PC-3 (cell line): ENCODE measurements at regions of chr7 and their contacts with region 1.

Region 1: GRCh38 chr7:148962823-148963582 is 65.3 kb downstream of the PDIA4 start:
- DNase-seq: peak; percentile 57
- ATAC-seq: peak; percentile 23
- H3K4me3 ChIP-seq: peak overlapping the region; percentile 76
- H3K27ac ChIP-seq: no peak overlapping the region
- H3K4me1 ChIP-seq: peaks cover 6% of the 10 kb centered on the region; the same call in 1 of the 2 replicates
- H3K27me3 ChIP-seq: no peaks in the 10 kb centered on the region
- CTCF ChIP-seq: peak; percentile 94

Region 2: DNA sequence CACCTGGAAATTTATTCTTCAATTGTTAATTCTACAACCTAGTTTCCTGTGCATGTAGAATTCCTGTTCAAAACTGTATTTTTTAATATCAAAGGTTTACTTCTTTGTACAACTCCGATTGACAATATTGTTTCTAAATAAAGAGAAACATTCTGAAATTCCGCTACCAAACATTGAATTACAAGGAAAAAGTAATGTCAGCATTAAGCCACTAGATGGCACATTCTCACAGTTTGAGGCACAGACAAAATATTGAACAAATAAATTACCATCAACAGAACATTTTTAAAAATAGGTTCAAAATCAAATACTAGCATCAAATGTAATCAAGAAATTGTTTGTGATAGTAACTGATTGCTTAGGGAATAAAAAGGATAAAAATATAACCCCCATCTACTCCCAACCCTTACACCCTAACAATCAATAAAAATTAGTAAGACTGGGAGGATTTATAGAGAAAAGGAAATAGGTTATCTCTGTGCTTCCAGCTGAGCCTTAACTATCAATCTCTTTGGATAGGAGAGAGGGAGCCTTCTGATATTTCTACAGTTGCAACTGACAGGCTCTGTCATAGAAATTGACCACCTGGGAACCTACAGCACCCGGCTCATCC is 459.0 kb before region 1 on chr7:
- CTCF ChIA-PET with region 1: no interaction called
- POLR2A ChIA-PET with region 1: no interaction called
- intact Hi-C with region 1: loop called (anchors 1 kb)
- DNase-seq: peak; percentile 57
- ATAC-seq: no peak
- H3K4me3 ChIP-seq: no peak overlapping the region
- H3K27ac ChIP-seq: no peak overlapping the region
- H3K4me1 ChIP-seq: no peaks in the 10 kb centered on the region
- H3K27me3 ChIP-seq: peaks cover 52% of the 10 kb centered on the region
- CTCF ChIP-seq: peak; percentile 80

Region 3: GRCh38 chr7:148664324-148664723 is 298.7 kb before region 1 on chr7:
- CTCF ChIA-PET with region 1: no interaction called
- POLR2A ChIA-PET with region 1: no interaction called
- intact Hi-C with region 1: no loop called
- DNase-seq: no peak
- ATAC-seq: peak; percentile 51; the same call in 1 of the 2 replicates
- H3K4me3 ChIP-seq: no peak overlapping the region
- H3K27ac ChIP-seq: no peak overlapping the region
- H3K4me1 ChIP-seq: no peaks in the 10 kb centered on the region
- H3K27me3 ChIP-seq: no peaks in the 10 kb centered on the region
- CTCF ChIP-seq: no peak

Region 4: DNA sequence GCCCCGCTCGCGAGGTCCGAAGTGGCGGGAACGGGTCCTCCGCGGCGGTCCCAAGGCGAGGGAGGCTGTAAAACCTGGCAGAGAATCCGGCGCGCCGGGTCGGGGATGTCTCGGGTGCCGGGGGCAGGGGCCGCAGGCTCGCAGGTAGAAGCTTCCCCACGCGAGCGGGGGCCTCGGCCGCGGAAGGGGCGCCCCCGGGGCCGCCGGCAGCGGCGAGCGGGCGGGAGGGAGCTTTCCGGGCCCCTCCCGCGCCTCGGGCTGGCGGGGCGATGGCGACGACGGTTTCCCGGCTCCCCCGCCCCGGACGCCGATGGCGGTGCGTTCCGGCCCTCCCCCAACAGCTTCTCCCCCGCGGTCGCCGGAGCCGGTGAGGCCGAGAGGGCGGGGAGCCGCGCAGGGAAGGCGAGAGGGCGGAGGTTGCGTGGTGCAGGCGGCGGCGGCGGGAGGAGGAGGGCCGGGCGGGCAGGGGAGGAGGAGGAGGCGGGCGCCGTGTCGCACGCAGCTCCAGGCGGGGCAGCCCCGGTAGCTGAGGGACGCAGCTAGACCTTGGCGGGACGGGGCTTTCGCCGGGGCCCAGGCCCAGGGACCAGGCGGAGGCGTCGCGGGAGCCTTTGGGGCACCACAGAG is 264.5 kb before region 1 on chr7 and contains the start of gene CUL1:
- CTCF ChIA-PET with region 1: interaction called, 14 read pairs
- POLR2A ChIA-PET with region 1: interaction called, 12 read pairs
- intact Hi-C with region 1: loop called (anchors 5 kb)
- DNase-seq: peak; percentile 66
- ATAC-seq: peak; percentile 77
- H3K4me3 ChIP-seq: peak within 1 kb of the TSS; percentile 81
- H3K27ac ChIP-seq: peak within 1 kb of the TSS; percentile 65
- H3K4me1 ChIP-seq: peaks cover 33% of the 10 kb centered on the region
- H3K27me3 ChIP-seq: no peaks in the 10 kb centered on the region
- CTCF ChIP-seq: no peak
- total RNA-seq, gene CUL1: 38.0 and 43.6 TPM in 2 replicates

Region 5: DNA sequence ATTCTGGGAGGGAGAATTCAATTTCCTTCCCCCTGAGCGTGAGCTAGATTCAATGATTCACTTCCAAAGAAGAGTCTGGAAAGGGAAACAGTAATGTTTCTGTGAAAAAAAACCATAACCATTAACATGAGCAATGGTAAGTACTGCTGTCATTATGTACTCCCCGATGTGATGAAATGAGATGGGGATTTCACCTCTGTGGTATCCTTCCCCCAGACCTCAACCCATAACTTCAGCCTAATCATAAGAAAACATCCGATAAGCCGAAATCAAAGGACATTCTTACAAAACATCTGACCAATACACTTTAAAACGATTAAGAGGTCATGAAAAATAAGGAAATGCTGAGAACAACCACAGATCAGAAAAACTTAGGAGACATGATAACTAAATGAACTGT is 106.1 kb before region 1 on chr7:
- CTCF ChIA-PET with region 1: interaction called, 5 read pairs
- POLR2A ChIA-PET with region 1: no interaction called
- intact Hi-C with region 1: loop called (anchors 1 kb)
- DNase-seq: no peak
- ATAC-seq: peak; percentile 15
- H3K4me3 ChIP-seq: no peak overlapping the region
- H3K27ac ChIP-seq: no peak overlapping the region
- H3K4me1 ChIP-seq: no peaks in the 10 kb centered on the region
- H3K27me3 ChIP-seq: no peaks in the 10 kb centered on the region
- CTCF ChIP-seq: no peak

Region 6: DNA sequence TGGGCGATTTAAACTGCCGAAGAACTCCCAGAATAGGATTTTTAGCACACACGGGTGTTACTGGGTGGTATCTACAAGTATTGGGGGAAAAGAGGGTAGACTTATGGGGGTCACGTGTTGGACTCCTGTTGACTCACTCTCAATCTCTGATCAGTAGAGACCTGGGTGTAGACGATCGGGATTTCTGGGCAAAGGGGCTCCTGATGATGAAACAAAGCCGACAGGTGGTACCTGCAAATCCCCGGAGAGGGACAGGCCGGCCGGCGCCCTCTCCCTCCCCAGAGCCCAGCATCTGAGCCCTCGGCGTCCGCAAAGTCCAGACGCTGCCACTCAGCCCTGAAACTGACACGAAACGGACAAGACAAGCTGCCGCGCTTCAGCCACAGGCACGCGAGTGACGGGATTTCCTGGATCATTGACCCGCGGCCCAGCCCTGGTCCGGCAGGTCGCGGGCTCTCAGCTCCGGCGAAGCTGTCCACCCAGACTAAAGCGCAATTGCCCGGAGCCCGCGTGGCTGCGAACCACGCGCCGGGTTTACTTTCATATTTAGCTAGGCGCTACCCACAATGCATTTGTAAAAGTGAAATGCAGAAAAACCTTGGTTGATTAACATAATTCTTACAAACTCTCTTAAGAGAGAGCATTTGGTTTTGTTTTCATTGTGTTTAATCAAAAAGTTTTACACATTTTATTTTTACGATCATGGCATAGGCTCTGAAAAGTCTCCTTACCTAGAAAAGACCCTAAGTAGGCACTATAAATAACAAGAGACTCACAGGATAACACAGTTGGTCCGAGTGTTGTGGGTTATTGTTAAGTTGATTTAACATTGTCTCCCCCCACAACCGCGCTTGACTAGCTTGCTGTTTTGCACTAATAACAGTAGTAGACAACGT is 22.1 kb before region 1 on chr7:
- CTCF ChIA-PET with region 1: interaction called, 6 read pairs
- POLR2A ChIA-PET with region 1: no interaction called
- intact Hi-C with region 1: loop called (anchors 1 kb)
- DNase-seq: peak; percentile 71
- ATAC-seq: peak; percentile 76
- H3K4me3 ChIP-seq: peak overlapping the region; percentile 76
- H3K27ac ChIP-seq: peak overlapping the region; percentile 73
- H3K4me1 ChIP-seq: peaks cover 12% of the 10 kb centered on the region
- H3K27me3 ChIP-seq: no peaks in the 10 kb centered on the region
- CTCF ChIP-seq: no peak

Region 7: GRCh38 chr7:149355390-149356048 is 392.5 kb after region 1 on chr7:
- CTCF ChIA-PET with region 1: no interaction called
- POLR2A ChIA-PET with region 1: no interaction called
- intact Hi-C with region 1: no loop called
- DNase-seq: peak; percentile 79
- ATAC-seq: peak; percentile 83
- H3K4me3 ChIP-seq: peak overlapping the region; percentile 55; the same call in 1 of the 2 replicates
- H3K27ac ChIP-seq: no peak overlapping the region
- H3K4me1 ChIP-seq: no peaks in the 10 kb centered on the region
- H3K27me3 ChIP-seq: no peaks in the 10 kb centered on the region
- CTCF ChIP-seq: peak; percentile 37; the same call in 1 of the 2 replicates